ENCODE measurements at regions of chr5 and their contacts with region 1.

Region 1: DNA sequence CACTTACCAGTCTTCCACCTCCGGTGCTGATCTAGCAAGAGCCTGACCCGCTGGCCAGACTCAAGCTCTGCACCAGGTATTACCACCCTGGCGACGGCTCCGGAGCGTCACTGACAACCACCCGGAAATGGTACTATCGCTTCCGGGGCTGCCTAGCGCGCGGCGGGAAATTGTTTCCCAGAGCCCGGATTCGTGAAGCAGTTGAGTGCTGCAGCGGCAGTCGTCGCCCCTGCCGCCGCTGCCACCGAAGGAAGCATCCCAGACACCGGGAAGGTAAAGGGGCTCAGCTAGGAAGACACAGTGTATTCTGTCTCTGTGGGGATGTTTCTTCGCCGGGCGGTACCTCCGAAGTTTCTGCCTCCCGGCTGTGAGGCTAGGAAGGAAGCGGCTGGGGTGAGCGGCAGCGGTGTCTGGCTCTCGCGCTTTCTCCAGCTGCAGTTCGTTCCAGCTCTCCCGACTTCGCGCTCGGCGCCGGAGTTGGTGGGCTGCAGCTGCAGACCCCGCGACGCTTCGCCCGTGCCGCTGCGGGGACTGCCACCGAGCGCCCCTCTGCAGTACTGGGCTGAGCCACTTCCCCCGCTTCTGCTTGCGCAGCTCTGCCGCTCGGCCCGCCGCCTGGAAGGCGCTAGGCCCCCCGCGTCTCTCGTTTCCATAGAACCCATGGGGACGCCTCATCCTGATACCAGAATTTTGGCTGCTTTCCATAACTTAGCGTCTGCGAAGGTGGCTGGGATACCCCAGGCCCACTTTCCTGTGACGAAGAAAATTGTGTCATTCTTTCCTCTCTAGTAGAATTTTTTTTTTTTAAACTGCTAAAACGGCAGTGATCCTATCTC is at the starts of genes KIAA0825 and SLF1:
- DNase-seq: peak; percentile 39
- ATAC-seq: peak; percentile 94
- H3K4me3 ChIP-seq: peak within 1 kb of the TSS; percentile 79
- H3K27ac ChIP-seq: peak within 1 kb of the TSS; percentile 45
- H3K4me1 ChIP-seq: peaks cover 3% of the 10 kb centered on the region
- H3K27me3 ChIP-seq: no peaks in the 10 kb centered on the region
- CTCF ChIP-seq: no peak
- EP300 ChIP-seq: no peak
- POLR2A ChIP-seq: peak; percentile 80
- RAD21 ChIP-seq: no peak
- polyA plus RNA-seq, gene KIAA0825: 0.90 to 1.9 TPM
- polyA plus RNA-seq, gene SLF1: 14.1 to 27.0 TPM

Region 2: DNA sequence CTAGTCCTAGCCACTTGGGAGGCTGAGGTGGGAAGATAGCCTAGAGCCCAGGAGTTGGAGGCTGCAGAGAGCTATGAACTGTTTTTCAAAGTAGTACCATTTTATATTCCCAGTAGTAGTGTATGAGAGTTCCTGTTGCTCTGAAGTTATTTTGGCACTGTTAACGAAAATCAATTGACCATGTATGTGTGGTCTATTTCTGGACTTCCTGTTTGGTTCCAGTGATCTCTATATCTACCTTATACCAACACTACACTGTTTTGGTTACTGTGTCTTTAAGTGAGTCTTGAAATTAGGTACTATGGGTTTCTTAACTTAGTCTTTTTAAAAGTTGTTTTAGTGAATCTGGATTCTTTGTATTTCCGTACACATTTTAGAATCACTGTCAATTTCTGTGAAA is 13.3 kb after region 1 on chr5:
- CTCF ChIA-PET with region 1: interaction called, 4 read pairs
- POLR2A ChIA-PET with region 1: interaction called, 3 read pairs
- RAD21 ChIA-PET with region 1: interaction called, 4 read pairs
- SMC1A ChIA-PET with region 1: interaction called, 13 read pairs
- in situ Hi-C with region 1: no loop called
- intact Hi-C with region 1: no loop called
- DNase-seq: peak; percentile 41
- ATAC-seq: peak; percentile 99
- H3K4me3 ChIP-seq: no peak overlapping the region
- H3K27ac ChIP-seq: peak overlapping the region; percentile 46
- H3K4me1 ChIP-seq: peaks cover 7% of the 10 kb centered on the region
- H3K27me3 ChIP-seq: no peaks in the 10 kb centered on the region
- CTCF ChIP-seq: no peak
- EP300 ChIP-seq: peak in 1 of 2 experiments; percentile 54; a peak in 1 of 4 replicates
- POLR2A ChIP-seq: no peak
- RAD21 ChIP-seq: no peak

Region 3: DNA sequence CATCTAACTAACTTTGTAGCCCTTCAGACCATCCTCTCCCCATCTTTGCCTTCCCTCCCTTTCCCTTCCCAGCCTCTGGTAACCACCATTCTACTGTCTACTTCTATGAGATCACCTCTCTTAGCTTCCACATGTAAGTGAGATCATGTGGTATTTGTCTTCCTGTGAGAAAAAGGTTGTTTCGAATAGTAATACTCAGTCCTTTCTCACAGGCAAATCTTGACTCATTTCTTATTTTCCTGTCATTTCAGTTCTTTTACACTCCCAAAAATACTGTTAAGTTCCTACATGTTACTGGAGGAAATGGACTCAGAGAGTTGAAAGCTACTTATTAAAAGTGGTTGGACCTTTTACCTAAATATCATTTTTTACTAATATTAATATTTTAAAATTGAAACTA is 81.9 kb after region 1 on chr5:
- CTCF ChIA-PET with region 1: interaction called, 5 read pairs
- POLR2A ChIA-PET with region 1: interaction called, 4 read pairs
- RAD21 ChIA-PET with region 1: no interaction called
- SMC1A ChIA-PET with region 1: interaction called, 9 read pairs
- in situ Hi-C with region 1: no loop called
- intact Hi-C with region 1: loop called (anchors 2 kb)
- DNase-seq: peak; percentile 33
- ATAC-seq: peak; percentile 82
- H3K4me3 ChIP-seq: no peak overlapping the region
- H3K27ac ChIP-seq: peak overlapping the region; percentile 18; the same call in 1 of the 2 replicates
- H3K4me1 ChIP-seq: peaks cover 19% of the 10 kb centered on the region; the same call in 1 of the 2 replicates
- H3K27me3 ChIP-seq: no peaks in the 10 kb centered on the region
- CTCF ChIP-seq: no peak
- EP300 ChIP-seq: peak in 1 of 2 experiments; percentile 48; a peak in 2 of 4 replicates
- POLR2A ChIP-seq: no peak
- RAD21 ChIP-seq: no peak